Breast epithelium (tissue), 4 donors: ENCODE measurements at regions of chr7 and their contacts with region 1.

Region 1: GRCh38 chr7:22488643-22489462 is 11.1 kb downstream of the STEAP1B start:
- DNase-seq: peak; percentile 40 to 60
- H3K4me3 ChIP-seq: no peak overlapping the region
- H3K27ac ChIP-seq: no peak overlapping the region
- H3K4me1 ChIP-seq: no peaks in the 10 kb centered on the region
- H3K27me3 ChIP-seq: no peaks in the 10 kb centered on the region
- CTCF ChIP-seq: peak; percentile 66 to 94 (median 86)
- POLR2A ChIP-seq: no peak

Region 2: GRCh38 chr7:22103255-22103969 is 385.4 kb before region 1 on chr7:
- intact Hi-C with region 1: loop called (anchors 2 kb)
- DNase-seq: peak; percentile 48 to 60
- H3K4me3 ChIP-seq: no peak overlapping the region
- H3K27ac ChIP-seq: no peak overlapping the region
- H3K4me1 ChIP-seq: no peaks in the 10 kb centered on the region
- H3K27me3 ChIP-seq: no peaks in the 10 kb centered on the region
- CTCF ChIP-seq: peak in 2 of 3 donors; percentile 60 to 81
- POLR2A ChIP-seq: no peak

Region 3: GRCh38 chr7:22295402-22296264 is 193.2 kb before region 1 on chr7:
- intact Hi-C with region 1: loop called (anchors 5 kb)
- DNase-seq: no peak
- H3K4me3 ChIP-seq: no peak overlapping the region
- H3K27ac ChIP-seq: no peak overlapping the region
- H3K4me1 ChIP-seq: no peaks in the 10 kb centered on the region
- H3K27me3 ChIP-seq: no peaks in the 10 kb centered on the region
- CTCF ChIP-seq: no peak
- POLR2A ChIP-seq: no peak

Region 4: DNA sequence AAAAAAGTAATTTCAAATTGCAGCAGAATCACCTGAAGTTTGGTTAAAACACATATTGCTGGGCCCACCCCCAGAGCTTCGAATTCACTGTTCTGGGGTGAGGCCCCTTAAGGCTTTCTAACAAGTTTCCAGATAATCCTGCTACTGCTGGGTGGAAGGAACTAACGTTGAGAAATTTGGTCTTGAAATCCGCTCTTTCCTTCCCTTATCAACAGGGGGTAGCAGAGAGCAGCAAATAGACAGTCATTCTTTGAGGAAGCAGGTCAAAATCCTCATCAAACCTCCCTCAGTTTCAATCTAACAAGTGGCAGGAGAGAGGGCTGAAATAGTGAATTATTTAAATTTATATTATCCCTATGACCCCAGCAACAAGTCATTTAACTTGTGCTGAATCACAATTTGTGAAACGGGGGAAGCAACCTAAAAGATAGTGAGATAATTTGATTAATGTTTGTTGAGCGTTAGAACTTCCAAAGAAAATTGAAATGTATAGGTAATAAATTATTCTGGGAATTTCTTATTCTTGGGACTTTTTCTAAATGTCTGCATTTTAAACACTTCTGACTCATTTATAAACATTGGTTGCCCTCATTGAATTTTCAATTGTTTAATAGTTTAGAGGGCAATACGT is 788.6 kb after region 1 on chr7:
- intact Hi-C with region 1: no loop called
- DNase-seq: no peak
- H3K4me3 ChIP-seq: no peak overlapping the region
- H3K27ac ChIP-seq: no peak overlapping the region
- H3K4me1 ChIP-seq: no peaks in the 10 kb centered on the region
- H3K27me3 ChIP-seq: no peaks in the 10 kb centered on the region
- CTCF ChIP-seq: peak; percentile 31 to 64 (median 55)
- POLR2A ChIP-seq: no peak